GM10248 (cell line): ENCODE measurements at regions of chr18 and their contacts with region 1.

Region 1: DNA sequence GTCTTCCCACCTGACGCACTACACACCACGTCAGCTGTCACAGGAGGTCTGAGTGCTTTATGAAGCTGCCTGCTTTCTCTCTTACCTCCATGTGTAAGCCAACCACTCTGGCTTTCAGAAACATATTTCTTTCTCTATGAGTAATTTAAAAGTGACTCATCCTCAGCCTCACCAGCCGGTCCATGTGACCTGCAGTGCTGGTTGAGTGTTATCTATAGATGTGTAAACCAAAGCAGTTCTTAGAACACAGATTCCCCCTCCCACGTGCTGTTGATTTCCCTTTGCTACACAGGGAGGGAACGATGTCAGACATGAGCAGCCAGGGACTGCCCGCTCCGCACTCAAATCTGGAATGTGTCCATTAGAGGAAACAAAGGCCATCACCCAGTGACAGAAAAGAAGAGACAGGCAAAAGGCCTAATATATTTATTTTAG is 157.8 kb downstream of the BCL2 start:
- DNase-seq: peak; percentile 73
- CTCF ChIP-seq: no peak

Region 2: DNA sequence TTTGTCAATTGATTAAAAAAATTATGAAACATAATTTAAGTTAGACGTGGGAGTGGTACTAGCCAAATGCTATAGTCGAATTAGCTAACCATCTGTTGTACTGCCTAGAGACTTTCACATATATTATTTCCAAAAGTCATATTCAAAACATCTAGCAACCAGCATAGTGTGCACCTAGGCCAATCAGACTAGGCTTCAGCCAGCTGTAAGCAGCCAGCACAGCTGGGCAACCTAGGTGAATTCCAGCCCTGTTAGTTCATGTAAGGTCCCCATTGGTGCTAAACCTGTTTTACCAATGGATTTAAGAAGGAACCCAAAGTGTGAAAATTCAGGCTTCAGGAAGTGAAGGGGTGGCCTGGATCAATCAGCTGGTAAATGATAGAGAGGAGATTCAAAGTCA is 13.5 kb after region 1 on chr18:
- CTCF ChIA-PET with region 1: interaction called, 23 read pairs
- POLR2A ChIA-PET with region 1: interaction called, 3 read pairs
- DNase-seq: no peak
- CTCF ChIP-seq: no peak

Region 3: DNA sequence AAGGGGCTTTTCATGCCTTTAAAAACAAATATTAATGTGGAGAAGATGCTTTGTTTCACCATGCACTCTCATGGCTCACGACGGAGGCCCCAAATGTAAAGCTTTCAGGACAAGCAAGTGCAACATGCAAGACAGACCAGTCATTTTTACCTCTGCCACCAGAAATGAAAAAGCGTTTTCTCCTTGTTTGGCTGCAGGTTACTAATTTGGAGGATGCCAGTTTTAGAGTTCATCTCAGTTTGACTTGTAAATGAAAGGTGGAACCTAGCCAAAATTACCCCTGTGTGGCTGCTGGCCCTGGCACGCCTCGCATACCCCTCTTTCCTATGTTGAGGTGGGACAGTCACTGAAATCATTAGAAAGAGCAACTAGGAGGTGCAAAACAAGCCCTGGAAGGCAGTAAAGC is 19.2 kb after region 1 on chr18:
- CTCF ChIA-PET with region 1: interaction called, 18 read pairs
- POLR2A ChIA-PET with region 1: interaction called, 5 read pairs
- DNase-seq: peak; percentile 37
- CTCF ChIP-seq: no peak

Region 4: DNA sequence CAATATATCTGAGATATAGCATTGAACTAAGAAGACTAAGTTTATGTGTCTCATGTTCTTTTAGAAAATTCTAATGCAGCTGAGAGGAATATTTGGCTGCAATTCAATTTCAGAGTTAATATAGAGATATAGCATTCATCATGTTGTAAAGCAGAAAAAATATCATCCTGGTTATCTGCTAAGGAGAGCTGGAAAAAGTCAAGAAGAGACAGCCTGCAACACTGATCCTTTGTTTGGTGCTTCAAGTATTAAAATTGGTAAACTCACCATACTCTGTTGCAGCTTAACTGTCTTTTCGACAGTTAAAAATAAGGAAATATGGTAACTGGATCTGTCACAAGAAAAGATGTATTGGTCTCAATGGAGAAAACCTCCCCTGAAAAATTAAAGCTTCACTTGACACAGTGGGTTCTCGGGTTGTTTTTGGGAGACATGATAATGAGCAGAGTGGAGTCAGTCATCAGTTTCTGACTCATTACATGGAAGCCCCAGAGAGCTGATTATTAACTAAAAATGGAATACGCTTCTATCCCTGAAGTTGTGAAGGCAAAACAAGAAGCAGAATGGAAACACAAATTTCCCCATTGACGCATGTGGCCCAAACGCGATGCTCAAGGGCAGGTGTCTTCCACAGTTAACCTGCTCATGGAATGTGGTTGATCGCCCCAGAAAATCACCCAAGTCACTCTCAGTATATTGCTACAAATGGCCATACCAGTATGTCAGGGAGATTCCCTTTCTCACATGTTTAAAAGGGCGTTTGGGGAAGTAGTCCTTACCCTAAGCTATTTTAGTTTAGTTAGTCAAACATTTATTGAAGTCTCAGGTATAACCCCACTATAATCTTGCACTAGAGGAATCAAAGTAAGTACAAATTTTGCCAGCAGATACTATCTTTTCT is 149.6 kb after region 1 on chr18:
- CTCF ChIA-PET with region 1: interaction called, 9 read pairs
- POLR2A ChIA-PET with region 1: interaction called, 12 read pairs
- DNase-seq: peak; percentile 44
- CTCF ChIP-seq: no peak

Region 5: DNA sequence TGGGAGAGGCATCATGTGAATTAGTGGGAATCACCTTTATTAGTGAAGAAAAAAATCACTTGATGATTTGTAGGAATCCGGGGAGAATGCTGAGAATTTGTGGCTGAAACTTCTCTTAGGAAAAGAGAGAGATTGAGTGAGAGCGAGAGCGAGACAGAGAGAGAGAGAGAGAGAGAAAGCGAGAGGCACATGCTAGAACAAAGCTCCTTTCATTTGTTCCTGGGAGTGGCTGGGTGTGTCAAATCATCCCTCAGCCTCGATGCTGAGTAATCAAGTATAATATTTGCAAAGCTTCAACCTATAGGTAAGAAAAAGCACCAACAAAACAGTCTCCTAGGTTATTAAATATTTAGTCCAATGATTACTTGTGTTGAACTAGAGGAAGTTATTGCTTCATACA is 310.6 kb after region 1 on chr18:
- CTCF ChIA-PET with region 1: no interaction called
- POLR2A ChIA-PET with region 1: no interaction called
- DNase-seq: no peak
- CTCF ChIP-seq: no peak